Esophagus squamous epithelium (tissue), 5 donors: ENCODE measurements at regions of chr11 and their contacts with region 1.

Region 1: GRCh38 chr11:35617687-35618496 is at the start of gene FJX1:
- DNase-seq: no peak
- H3K4me3 ChIP-seq: peak within 1 kb of the TSS; percentile 53 to 76 (median 64)
- H3K27ac ChIP-seq: peak within 1 kb of the TSS; percentile 79 to 88 (median 86)
- H3K4me1 ChIP-seq: peaks cover 18 to 61% (median 20%) of the 10 kb centered on the region in 3 donors
- H3K27me3 ChIP-seq: peaks cover 0 to 61% (median 0%) of the 10 kb centered on the region in 4 donors
- CTCF ChIP-seq: no peak
- POLR2A ChIP-seq: no peak
- total RNA-seq, gene FJX1: 8.8 to 12.4 (median 11.1) TPM

Region 2: GRCh38 chr11:35815556-35816315 is 197.8 kb after region 1 on chr11:
- intact Hi-C with region 1: loop called (anchors 5 kb)
- DNase-seq: no peak
- H3K4me3 ChIP-seq: no peak overlapping the region
- H3K27ac ChIP-seq: no peak overlapping the region
- H3K4me1 ChIP-seq: peaks cover 5 to 37% (median 11%) of the 10 kb centered on the region in 3 donors
- H3K27me3 ChIP-seq: no peaks in the 10 kb centered on the region
- CTCF ChIP-seq: no peak
- POLR2A ChIP-seq: no peak

Region 3: GRCh38 chr11:36131721-36132397 is 514.0 kb after region 1 on chr11:
- intact Hi-C with region 1: loop called (anchors 10 kb)
- DNase-seq: no peak
- H3K4me3 ChIP-seq: no peak overlapping the region
- H3K27ac ChIP-seq: peak overlapping the region in 1 of 4 donors; percentile 21
- H3K4me1 ChIP-seq: peaks cover 0 to 4% (median 0%) of the 10 kb centered on the region in 3 donors
- H3K27me3 ChIP-seq: no peaks in the 10 kb centered on the region
- CTCF ChIP-seq: peak in 4 of 6 experiments; percentile 42 to 59 (median 48)
- POLR2A ChIP-seq: no peak

Region 4: GRCh38 chr11:36265793-36266628 is 648.1 kb after region 1 on chr11:
- intact Hi-C with region 1: loop called (anchors 5 kb)
- DNase-seq: no peak
- H3K4me3 ChIP-seq: no peak overlapping the region
- H3K27ac ChIP-seq: no peak overlapping the region
- H3K4me1 ChIP-seq: no peaks in the 10 kb centered on the region
- H3K27me3 ChIP-seq: no peaks in the 10 kb centered on the region
- CTCF ChIP-seq: peak; percentile 40 to 89 (median 78)
- POLR2A ChIP-seq: no peak

Region 5: DNA sequence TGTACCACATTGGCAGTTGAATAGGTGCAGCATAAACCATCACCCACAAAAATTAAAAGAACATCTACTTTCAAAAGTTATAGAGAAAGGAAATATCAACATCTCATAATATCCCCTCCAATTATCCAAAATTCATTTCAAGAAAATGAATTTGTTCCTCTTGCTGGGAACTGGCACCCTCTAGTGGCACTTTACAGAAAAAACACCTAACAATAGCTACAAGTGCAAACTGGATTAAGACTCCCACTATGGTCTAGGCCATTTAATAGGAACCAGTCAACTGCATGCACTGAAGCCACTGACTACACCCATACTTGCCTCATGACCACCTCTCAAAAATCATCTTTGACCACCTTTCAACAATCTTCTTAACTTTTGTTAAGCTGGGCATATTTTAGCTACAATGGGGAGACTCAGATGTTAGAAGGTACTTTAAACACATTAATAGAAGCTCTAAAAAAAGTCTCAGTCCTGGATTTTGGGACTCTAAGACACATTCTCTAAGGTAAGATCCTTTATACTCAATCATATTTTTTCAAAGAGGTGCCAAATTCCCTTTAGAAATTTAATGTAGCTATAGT is 874.9 kb after region 1 on chr11:
- intact Hi-C with region 1: loop called (anchors 10 kb)
- DNase-seq: no peak
- H3K4me3 ChIP-seq: no peak overlapping the region
- H3K27ac ChIP-seq: no peak overlapping the region
- H3K4me1 ChIP-seq: peaks cover 0 to 4% (median 0%) of the 10 kb centered on the region in 3 donors
- H3K27me3 ChIP-seq: no peaks in the 10 kb centered on the region
- CTCF ChIP-seq: peak; percentile 20 to 76 (median 63)
- POLR2A ChIP-seq: no peak